A549 (cell line): ENCODE measurements at regions of chr11 and their contacts with region 1.

Region 1: DNA sequence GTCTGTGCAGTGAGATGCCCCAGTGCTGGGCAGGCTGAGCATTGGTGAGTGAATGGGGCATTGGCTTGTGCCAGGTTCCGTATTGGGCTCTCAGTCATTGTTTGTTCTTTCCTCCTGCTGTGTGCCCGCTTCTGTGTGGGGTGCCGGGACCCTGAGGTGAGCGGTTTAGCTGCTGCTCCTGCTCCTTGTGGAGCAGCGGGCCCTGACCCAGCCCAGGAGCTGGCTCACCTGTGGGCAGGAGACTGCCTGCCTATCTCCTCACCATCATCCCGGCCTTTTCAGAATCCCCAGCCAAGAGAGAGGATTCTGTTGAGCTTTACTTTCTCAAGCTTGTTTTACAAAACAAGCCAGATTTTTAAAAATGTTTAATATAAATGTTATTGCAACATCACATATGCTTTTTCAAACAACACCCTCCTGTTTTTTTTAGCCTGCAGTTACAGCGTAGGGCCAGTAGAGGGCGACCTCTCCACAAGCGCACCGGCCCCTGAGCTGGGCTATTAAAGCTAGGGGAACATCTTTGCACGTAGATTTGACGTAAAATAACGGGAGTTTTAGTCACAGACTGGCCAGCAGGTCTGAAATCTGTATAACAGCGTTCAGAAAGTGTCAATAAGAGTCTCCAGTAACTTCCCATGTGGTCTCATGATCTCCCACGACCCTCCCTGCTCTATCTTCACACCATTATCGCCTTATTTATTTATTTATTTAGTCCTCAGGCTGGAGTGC is 25.1 kb upstream of the RELT start:
- DNase-seq: peak; percentile 73 to 92
- ATAC-seq: peak; percentile 47 to 80; a peak in 5 of 6 replicates
- H3K4me3 ChIP-seq: no peak overlapping the region
- H3K27ac ChIP-seq: no peak overlapping the region
- H3K4me1 ChIP-seq: no peaks in the 10 kb centered on the region
- CTCF ChIP-seq: peak; percentile 94
- EP300 ChIP-seq: no peak
- POLR2A ChIP-seq: no peak
- RAD21 ChIP-seq: peak; percentile 72 to 73

Region 2: GRCh38 chr11:73055655-73056354 is 295.3 kb before region 1 on chr11:
- CTCF ChIA-PET with region 1: no interaction called
- POLR2A ChIA-PET with region 1: no interaction called
- DNase-seq: no peak
- ATAC-seq: no peak
- H3K4me3 ChIP-seq: no peak overlapping the region
- H3K27ac ChIP-seq: no peak overlapping the region
- H3K4me1 ChIP-seq: peaks cover 18% of the 10 kb centered on the region
- CTCF ChIP-seq: no peak
- EP300 ChIP-seq: no peak
- POLR2A ChIP-seq: no peak
- RAD21 ChIP-seq: no peak

Region 3: GRCh38 chr11:73295231-73295995 is 55.7 kb before region 1 on chr11:
- CTCF ChIA-PET with region 1: interaction called, 24 read pairs
- POLR2A ChIA-PET with region 1: no interaction called
- DNase-seq: peak; percentile 70 to 73
- ATAC-seq: peak; percentile 65 to 84
- H3K4me3 ChIP-seq: no peak overlapping the region
- H3K27ac ChIP-seq: peak overlapping the region in 1 of 2 experiments; percentile 47; a peak in 1 of 6 replicates
- H3K4me1 ChIP-seq: peaks cover 8% of the 10 kb centered on the region
- CTCF ChIP-seq: peak; percentile 86
- EP300 ChIP-seq: no peak
- POLR2A ChIP-seq: no peak
- RAD21 ChIP-seq: peak in 1 of 2 experiments; percentile 60; a peak in 4 of 5 replicates

Region 4: DNA sequence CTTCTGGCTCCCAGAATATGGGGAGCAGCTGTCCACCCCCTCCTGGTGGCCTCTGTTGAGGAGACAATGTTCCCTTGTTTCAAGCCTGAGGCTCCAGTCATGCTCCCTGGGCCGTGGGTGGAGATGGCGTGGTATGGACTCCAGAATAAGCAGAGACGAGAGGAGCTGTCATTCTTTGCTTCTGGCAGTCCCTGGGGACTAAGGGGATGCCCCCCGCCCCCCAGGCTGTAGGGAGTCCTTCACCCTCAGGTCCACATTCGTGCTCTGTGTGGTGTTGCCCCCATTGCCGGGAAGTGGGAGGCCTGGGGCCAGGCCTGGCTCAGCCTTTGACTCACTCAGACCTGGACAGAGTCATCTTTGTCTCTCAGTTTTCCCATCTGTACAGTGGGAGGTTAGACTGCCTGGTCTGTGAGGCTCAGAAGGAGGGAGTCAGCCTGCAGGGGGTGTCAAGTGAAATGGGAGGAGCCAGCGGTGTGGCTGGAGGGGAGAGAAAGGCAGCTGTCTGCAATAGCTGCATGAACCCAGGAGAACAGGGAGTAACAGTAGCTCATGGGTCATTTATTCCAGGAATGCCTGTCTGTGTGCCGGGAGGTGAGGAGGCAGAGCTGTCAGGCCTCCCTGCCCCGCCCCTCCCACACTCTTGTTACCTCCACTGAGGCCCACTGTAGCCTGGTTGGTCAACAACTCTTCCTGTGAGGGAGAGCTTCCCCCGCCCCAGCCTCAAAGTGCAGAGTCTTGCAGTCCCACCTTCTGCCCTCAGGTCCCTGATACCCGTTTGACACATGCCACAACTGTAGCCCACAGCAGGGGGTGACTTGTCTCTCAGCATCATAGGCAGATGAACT is 36.7 kb before region 1 on chr11:
- CTCF ChIA-PET with region 1: interaction called, 101 read pairs
- POLR2A ChIA-PET with region 1: no interaction called
- DNase-seq: peak in 1 of 2 experiments; percentile 30
- ATAC-seq: peak in 1 of 2 experiments; percentile 29; a peak in 3 of 6 replicates
- H3K4me3 ChIP-seq: no peak overlapping the region
- H3K27ac ChIP-seq: peak overlapping the region in 1 of 2 experiments; percentile 21; a peak in 1 of 6 replicates
- H3K4me1 ChIP-seq: peaks cover 32% of the 10 kb centered on the region
- CTCF ChIP-seq: no peak
- EP300 ChIP-seq: no peak
- POLR2A ChIP-seq: no peak
- RAD21 ChIP-seq: no peak

Region 5: DNA sequence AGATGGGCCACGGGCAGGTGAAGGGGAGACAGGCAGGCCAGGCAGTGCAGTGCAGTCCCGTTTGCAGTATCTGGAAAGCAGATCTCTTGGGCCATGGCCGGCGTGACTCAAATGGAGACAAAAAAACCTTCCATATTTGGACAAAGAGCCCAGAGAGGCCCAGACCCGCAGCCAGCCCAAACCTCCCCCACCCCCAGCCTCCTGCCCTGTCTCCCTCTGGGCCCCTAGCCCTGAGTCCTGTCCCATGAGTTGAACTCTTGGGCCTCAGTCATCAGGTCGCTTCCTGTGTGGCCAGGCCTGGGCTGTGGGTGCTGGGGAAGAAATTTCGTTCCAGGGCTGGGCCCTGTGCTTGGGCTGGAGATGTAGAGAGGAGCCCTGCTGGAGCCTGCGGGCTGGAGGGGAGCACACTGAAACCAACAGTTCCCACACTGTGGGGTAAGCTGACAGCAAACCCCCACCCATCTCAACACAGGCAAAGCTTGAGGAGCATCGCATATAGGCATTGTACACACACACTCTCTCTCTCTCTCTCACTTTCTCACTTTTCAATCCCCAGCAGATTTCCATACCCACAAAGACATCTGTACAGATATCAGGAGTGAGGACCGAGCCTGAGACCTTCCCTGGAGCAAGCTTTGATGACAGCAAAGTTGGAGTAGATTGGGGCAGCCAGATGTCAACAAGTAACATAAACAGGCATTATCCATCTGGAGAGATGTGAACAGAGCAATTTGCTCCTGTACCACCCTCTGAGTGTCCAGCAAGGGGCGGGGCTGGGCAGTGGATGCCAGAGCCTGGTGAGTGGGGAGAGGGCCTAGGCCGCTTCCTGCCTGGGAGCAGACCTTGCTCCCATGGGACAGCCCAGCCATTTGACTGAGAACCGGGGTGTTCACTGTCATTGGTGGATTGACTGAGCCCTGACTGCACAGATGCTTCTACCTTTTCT is 25.8 kb before region 1 on chr11:
- CTCF ChIA-PET with region 1: interaction called, 27 read pairs
- POLR2A ChIA-PET with region 1: no interaction called
- DNase-seq: no peak
- ATAC-seq: no peak
- H3K4me3 ChIP-seq: no peak overlapping the region
- H3K27ac ChIP-seq: no peak overlapping the region
- H3K4me1 ChIP-seq: peaks cover 9% of the 10 kb centered on the region; the same call in 2 of the 3 replicates
- CTCF ChIP-seq: no peak
- EP300 ChIP-seq: no peak
- POLR2A ChIP-seq: no peak
- RAD21 ChIP-seq: no peak

Region 6: DNA sequence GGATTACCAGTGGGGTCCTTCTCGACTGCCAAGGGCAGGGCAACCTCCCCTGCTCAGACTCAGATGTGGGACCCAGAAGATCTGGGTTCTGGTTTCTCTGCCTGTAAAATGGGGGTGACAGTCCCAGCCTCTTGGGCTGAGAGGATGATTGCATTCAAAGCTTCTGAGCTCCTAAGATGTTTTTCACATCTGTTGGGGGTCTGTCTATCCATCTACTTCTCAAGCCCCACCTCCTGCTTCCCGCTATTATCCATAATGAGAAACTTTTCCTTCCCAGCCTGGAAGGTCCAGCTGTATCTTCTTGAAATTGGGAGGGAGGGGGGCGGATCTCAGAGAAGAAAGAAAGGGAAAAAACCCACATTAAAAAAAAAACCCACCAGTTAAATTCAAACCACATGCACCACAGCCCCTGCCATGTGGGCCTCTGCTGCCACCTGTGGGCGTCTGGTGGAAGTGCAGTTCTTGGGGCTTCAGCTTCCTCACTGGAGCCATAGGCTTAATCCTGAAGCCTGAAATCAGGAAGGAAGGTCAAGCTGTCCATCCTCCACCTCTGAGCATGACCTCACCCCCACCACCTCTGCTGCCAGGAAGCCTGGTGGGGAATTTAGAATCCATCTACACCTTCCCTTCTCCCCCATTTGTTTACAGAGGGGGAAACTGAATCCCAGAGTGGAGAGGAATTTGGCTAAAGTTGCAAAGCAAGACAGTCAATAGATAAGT is 15.7 kb before region 1 on chr11:
- CTCF ChIA-PET with region 1: interaction called, 257 read pairs
- POLR2A ChIA-PET with region 1: no interaction called
- DNase-seq: peak; percentile 73 to 93
- ATAC-seq: peak; percentile 72 to 83
- H3K4me3 ChIP-seq: no peak overlapping the region
- H3K27ac ChIP-seq: peak overlapping the region; percentile 62 to 80
- H3K4me1 ChIP-seq: peaks cover 38% of the 10 kb centered on the region
- CTCF ChIP-seq: peak; percentile 97
- EP300 ChIP-seq: no peak
- POLR2A ChIP-seq: no peak
- RAD21 ChIP-seq: peak; percentile 93 to 95

Region 7: DNA sequence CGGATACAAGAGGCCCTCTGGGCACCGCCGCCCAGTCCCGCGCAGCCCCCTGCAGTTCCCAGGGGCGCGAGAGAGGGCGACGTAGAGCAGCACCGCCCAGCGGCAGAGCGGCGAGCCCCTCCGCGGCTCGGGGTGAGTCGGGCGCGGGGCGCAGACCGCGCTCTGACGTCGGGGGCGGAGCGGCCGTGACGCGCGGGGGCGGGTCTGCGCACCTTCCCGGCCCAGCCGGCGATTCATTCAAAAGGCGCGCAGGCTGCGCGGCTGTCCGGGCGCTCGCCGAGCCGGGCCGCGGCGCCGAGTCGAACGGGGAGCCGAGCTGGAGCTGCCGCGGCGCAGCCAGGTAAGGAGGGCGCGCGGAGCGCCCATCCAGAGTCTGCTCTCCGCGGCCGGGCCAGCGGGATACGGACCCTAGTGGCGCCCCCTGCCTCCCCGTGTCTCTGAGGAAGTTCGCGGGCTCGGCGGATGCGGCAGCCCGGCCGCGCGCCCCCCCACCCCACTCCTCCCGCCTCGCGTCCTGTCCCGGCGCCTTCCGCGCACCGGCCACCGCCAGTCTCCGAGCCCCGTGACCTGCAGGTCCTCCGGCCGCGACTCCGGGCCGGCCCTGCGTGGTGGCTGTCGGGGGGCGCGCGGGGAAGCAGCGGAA is 25.2 kb after region 1 on chr11 and contains the start of gene RELT:
- CTCF ChIA-PET with region 1: interaction called, 667 read pairs
- POLR2A ChIA-PET with region 1: interaction called, 7 read pairs
- DNase-seq: peak; percentile 89 to 91
- ATAC-seq: peak; percentile 83 to 84
- H3K4me3 ChIP-seq: peak within 1 kb of the TSS; percentile 59
- H3K27ac ChIP-seq: peak within 1 kb of the TSS; percentile 75 to 93
- H3K4me1 ChIP-seq: peaks cover 23% of the 10 kb centered on the region
- CTCF ChIP-seq: peak; percentile 73
- EP300 ChIP-seq: no peak
- POLR2A ChIP-seq: peak; percentile 98
- RAD21 ChIP-seq: peak; percentile 38 to 44; a peak in 3 of 5 replicates
- polyA plus RNA-seq, gene RELT: 2.9 TPM in 2 replicates

Region 8: DNA sequence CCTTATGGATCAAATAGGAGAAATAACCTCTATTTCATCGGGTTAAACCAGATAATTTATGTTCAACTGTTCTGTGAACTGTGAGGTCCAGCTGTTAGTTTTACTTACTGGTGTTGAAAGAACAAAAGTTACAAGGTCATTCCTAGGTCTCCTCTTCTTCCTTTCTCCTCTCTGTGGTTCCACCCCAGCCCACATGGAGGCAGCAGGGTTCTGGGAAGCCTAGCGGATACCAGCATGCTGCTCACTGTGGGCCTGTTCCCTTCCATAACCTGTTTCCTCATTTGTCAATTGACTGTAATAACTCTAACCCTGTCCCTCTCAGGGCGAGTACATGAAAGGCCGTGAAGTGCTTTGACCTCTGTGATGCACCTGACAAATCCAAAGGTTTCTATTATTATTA is 53.0 kb after region 1 on chr11:
- CTCF ChIA-PET with region 1: interaction called, 667 read pairs
- POLR2A ChIA-PET with region 1: no interaction called
- DNase-seq: peak; percentile 59 to 63
- ATAC-seq: peak; percentile 74 to 88
- H3K4me3 ChIP-seq: no peak overlapping the region
- H3K27ac ChIP-seq: no peak overlapping the region
- H3K4me1 ChIP-seq: no peaks in the 10 kb centered on the region
- CTCF ChIP-seq: peak; percentile 45
- EP300 ChIP-seq: no peak
- POLR2A ChIP-seq: no peak
- RAD21 ChIP-seq: peak; percentile 48 to 73

Region 9: DNA sequence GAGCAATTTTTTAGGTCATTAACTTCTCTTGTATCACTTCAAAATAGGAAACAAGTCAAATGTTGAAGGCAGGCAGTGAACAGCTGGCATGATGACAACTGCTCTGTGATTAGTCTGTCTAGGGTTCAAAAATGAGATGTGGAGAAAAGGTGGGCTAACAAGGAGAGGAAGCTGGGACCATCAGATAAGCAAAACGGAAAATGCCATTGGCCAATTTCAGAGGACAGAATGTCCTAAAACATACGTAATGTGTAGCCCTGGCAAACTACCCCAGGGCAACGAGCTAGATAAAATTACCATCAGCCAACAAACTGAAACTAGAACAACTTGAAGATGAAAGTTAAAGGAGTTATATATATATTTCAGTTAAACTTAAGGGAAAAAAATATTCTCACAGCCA is 118.3 kb after region 1 on chr11:
- CTCF ChIA-PET with region 1: no interaction called
- POLR2A ChIA-PET with region 1: no interaction called
- DNase-seq: no peak
- ATAC-seq: no peak
- H3K4me3 ChIP-seq: no peak overlapping the region
- H3K27ac ChIP-seq: no peak overlapping the region
- H3K4me1 ChIP-seq: no peaks in the 10 kb centered on the region
- CTCF ChIP-seq: no peak
- EP300 ChIP-seq: no peak
- POLR2A ChIP-seq: no peak
- RAD21 ChIP-seq: no peak